ENCODE measurements at regions of chr11 and their contacts with region 1.

Region 1: DNA sequence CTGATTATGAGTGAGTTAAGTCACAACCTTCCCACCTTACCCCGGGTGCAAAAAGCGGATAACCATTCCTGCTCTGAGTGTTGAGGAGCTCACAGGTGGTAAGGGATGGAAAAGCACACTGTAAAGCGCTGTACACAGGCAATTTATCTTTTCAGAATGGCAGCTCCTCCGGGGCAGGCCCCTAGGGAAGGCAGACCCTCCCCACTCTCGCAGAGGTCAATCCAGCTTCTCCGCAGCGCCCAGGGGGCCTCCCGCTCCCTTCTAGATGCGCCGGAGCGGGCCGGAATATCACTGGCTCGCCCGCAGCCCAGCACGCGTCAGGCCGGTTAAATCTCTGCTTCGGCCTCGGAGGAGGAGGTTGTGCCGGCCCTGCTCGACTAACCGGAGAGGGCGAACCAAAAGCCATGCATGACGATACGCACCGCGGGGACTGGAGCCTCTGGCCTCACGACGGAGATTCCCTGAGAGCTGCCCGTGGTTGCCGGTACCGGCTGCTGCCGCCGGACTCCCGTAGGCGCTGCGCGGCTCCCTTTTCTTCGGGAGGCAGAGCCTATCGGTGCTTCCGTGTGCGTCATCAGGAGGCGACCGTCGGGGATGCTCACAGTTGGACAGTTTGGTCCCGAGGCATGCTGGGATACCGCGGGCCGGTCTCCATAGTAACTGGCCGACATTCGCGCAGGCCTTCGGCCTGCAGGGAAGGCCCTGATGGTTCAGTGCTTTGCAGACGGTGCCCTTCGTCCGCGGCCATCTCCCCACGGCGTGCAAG is at the start of gene BRMS1:
- DNase-seq: peak; percentile 95 to 98
- ATAC-seq: peak; percentile 88 to 95 (median 91)
- H3K4me3 ChIP-seq: peak within 1 kb of the TSS; percentile 91
- H3K4me3 Mint-ChIP-seq: peak within 1 kb of the TSS; percentile 98
- H3K27ac ChIP-seq: peak within 1 kb of the TSS; percentile 86
- H3K27ac Mint-ChIP-seq: peak within 1 kb of the TSS; percentile 96
- H3K4me1 ChIP-seq: peaks cover 46% of the 10 kb centered on the region
- H3K4me1 Mint-ChIP-seq: peaks cover 36 to 45% of the 10 kb centered on the region in 2 donors
- H3K27me3 ChIP-seq: no peaks in the 10 kb centered on the region
- H3K27me3 Mint-ChIP-seq: peaks cover 0 to 7% of the 10 kb centered on the region in 2 donors
- CTCF ChIP-seq: no peak
- total RNA-seq, gene BRMS1: 48.1 to 55.6 (median 48.2) TPM

Region 2: DNA sequence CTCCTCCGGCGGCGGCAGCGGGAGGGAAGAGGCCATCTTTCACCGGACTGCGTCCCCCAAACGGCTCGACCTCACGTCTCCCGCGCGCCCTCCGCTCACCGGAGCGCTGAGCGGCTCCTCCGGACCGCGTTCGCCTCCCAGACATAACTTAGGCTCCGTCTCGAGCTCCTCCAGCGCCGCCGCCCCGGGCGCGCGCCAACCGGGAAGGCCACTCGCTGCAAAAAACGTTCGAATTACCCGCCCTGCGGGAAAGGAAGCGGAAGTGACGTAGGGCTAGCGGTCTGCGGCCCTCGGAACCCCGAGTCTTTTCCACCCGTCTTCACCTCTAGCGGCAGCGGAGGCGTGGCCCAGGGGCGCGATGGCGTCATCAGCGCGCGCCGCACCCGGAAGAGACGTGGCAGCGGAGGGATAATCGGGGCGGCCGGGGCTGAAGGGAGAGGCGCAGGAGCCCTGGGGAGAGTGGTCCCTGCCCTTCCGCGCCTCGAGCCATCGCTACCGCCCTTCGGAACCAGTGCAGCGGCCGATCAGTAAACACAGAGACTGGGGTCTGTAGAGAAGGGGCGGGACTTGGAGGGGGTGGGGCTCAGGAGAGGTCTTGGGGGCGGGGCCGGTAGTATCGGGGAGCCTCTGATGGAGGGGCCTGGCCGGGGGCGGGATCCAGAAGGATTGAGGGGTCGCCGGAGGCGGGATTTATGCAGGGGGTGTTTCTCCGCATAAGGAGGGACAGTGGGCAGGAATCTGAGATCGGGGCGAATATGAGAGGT is 1260.7 kb before region 1 on chr11 and contains the starts of genes CDCA5 and ZFPL1:
- intact Hi-C with region 1: loop called (anchors 10 kb)
- DNase-seq: peak; percentile 98 to 99
- ATAC-seq: peak; percentile 90 to 93 (median 92)
- H3K4me3 ChIP-seq: peak within 1 kb of the TSS; percentile 81
- H3K4me3 Mint-ChIP-seq: peak within 1 kb of the TSS; percentile 94
- H3K27ac ChIP-seq: peak within 1 kb of the TSS; percentile 96
- H3K27ac Mint-ChIP-seq: peak within 1 kb of the TSS; percentile 98 to 100
- H3K4me1 ChIP-seq: peaks cover 16% of the 10 kb centered on the region
- H3K4me1 Mint-ChIP-seq: peaks cover 27 to 31% of the 10 kb centered on the region in 2 donors
- H3K27me3 ChIP-seq: no peaks in the 10 kb centered on the region
- H3K27me3 Mint-ChIP-seq: no peaks in the 10 kb centered on the region
- CTCF ChIP-seq: no peak
- total RNA-seq, gene CDCA5: 3.3 to 6.8 (median 3.8) TPM
- total RNA-seq, gene ZFPL1: 49.8 to 60.2 (median 50.8) TPM

Region 3: DNA sequence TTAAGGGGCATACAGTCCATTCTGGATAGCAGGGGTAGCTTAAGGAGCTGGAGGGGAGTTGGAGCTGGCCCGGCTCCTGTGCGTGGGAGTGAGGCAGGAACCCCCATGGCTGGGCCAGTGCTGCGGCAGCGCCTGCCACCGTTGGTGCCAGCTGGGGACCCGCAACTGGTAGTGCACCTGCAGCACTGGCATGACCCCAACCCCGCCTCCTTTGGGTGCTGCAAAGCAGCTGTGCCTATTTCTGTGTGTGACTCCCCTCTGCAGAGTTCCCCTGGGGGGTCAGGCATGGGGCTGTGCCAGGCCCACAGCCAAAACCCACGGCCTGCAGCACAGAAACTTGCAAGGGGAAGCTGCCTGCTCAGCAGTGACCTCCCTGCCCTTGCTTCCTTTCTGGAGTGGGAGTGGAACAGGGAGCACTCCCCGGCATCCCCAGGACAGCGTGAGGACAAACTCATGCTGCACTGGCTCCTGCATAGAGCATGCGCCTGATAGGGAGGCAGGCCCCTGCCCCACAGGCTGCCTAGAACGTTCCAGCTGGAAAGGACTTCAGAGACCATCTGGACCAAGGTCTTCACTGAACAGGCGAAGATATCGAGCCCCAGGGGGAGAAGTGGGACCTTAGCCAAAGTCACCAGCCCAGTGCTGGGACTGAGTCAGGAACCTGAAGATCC is 102.5 kb before region 1 on chr11:
- intact Hi-C with region 1: no loop called
- DNase-seq: no peak
- ATAC-seq: no peak
- H3K4me3 ChIP-seq: no peak overlapping the region
- H3K4me3 Mint-ChIP-seq: no peak overlapping the region
- H3K27ac ChIP-seq: no peak overlapping the region
- H3K27ac Mint-ChIP-seq: no peak overlapping the region
- H3K4me1 ChIP-seq: peaks cover 36% of the 10 kb centered on the region
- H3K4me1 Mint-ChIP-seq: peaks cover 16 to 27% of the 10 kb centered on the region in 2 donors
- H3K27me3 ChIP-seq: no peaks in the 10 kb centered on the region
- H3K27me3 Mint-ChIP-seq: no peaks in the 10 kb centered on the region
- CTCF ChIP-seq: no peak

Region 4: DNA sequence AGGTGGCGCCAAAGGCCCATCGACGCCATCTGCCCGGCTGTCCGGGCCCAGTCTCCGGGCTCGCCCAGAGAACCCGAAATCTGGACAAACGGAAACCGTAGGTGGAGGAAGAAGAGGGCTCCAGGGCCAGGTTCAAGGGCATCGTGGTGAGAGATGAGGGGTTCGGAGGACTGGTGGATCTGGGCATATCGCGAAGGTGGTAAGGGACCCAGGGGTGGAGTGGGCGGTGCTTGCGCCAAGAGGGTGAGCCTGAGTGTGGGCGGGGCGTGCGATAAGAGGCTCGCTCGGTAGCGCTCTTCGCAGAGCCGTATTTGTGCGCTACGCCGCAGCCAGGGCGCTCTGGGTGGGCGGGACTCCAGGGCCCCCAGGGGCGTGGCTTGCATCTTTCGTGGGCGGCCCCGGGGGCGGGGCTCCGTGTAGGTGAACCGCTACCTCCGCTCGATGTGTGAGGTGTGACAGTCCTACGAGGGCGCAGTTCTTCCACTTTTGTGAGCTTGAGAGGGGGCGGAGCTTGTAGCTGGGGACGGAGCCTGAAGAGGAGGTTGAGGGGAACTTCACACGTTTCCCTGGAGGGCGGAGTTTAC is 32.7 kb before region 1 on chr11:
- intact Hi-C with region 1: loop called (anchors 1 kb)
- DNase-seq: peak; percentile 95 to 99
- ATAC-seq: peak; percentile 77 to 89 (median 78)
- H3K4me3 ChIP-seq: peak overlapping the region; percentile 51
- H3K4me3 Mint-ChIP-seq: peak overlapping the region; percentile 98
- H3K27ac ChIP-seq: peak overlapping the region; percentile 85
- H3K27ac Mint-ChIP-seq: peak overlapping the region; percentile 94 to 97
- H3K4me1 ChIP-seq: peaks cover 23% of the 10 kb centered on the region
- H3K4me1 Mint-ChIP-seq: peaks cover 11 to 21% of the 10 kb centered on the region in 2 donors
- H3K27me3 ChIP-seq: no peaks in the 10 kb centered on the region
- H3K27me3 Mint-ChIP-seq: peaks cover 11 to 22% of the 10 kb centered on the region in 2 donors
- CTCF ChIP-seq: peak; percentile 57

Region 5: DNA sequence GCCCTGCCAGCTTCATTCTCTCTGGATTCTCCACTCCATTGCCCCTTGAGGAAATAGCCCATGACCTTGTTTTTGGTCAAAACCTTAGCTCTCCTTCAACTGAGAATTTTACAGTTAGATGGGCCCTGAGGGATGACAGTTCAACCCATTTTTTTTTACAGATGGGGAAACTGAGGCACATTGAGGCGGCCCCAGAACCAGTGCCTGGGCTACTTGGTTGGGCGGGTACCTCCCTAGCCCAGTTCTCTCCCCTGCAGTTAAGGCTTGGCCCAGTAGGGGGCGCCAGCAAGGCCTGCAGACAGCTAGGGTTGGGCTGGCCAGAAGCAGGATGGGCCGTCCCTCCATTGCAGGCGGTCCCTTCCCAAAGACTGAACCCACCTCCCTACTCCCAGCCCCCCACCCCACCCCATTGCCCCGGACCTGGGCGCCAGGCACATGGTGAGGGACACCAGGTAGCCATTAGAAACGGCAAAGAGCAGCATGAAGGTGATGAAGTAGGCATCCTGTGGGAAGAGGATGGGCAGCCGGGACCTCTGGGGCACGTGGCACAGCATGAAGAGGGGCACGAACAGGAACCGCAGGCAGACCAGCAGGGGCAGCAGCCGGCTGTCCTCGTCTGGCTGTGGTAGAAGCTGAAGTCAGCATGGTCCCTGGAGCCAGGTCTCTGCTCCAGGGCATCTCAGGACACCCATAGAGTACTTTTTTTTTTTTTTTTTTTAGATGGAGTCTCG is 19.2 kb after region 1 on chr11:
- intact Hi-C with region 1: no loop called
- DNase-seq: peak; percentile 58 to 74
- ATAC-seq: peak; percentile 58 to 75 (median 60)
- H3K4me3 ChIP-seq: no peak overlapping the region
- H3K4me3 Mint-ChIP-seq: no peak overlapping the region
- H3K27ac ChIP-seq: no peak overlapping the region
- H3K27ac Mint-ChIP-seq: no peak overlapping the region
- H3K4me1 ChIP-seq: no peaks in the 10 kb centered on the region
- H3K4me1 Mint-ChIP-seq: no peaks in the 10 kb centered on the region
- H3K27me3 ChIP-seq: no peaks in the 10 kb centered on the region
- H3K27me3 Mint-ChIP-seq: peaks cover 0 to 2% of the 10 kb centered on the region in 2 donors
- CTCF ChIP-seq: peak; percentile 67

Region 6: DNA sequence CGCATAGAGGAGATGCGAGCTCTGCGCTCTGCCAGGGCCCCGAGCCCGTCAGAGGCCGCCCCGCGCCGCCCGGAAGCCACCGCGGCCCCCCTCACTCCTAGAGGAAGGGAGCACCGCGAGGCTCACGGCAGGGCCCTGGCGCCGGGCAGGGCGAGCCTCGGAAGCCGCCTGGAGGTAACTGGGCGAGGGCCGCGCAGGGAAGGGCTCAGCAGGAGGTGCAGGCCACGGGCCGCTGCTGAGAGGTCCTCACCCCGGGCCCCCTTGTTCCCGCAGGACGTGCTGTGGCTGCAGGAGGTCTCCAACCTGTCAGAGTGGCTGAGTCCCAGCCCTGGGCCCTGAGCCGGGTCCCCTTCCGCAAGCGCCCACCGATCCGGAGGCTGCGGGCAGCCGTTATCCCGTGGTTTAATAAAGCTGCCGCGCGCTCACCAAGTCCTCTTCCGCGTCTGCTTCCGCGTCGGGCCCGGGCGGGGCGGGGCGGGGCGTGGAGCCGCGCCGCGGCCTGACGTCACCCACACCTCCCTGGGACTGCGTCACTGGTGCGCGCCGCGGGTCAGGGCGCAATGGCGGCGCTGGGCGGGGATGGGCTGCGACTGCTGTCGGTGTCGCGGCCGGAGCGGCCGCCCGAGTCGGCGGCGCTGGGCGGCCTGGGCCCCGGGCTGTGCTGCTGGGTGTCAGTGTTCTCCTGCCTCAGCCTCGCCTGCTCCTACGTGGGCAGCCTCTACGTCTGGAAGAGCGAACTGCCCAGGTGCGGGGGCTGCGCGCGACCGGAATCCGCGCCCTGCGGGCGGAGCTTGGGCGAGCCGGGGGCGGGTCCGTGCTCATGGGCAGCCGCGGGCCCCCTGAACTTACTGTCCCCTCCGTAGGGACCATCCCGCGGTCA is 498.4 kb after region 1 on chr11 and contains the start of gene RCE1:
- intact Hi-C with region 1: loop called (anchors 1 kb)
- DNase-seq: peak; percentile 94 to 96
- ATAC-seq: peak; percentile 90 to 97 (median 91)
- H3K4me3 ChIP-seq: peak within 1 kb of the TSS; percentile 97
- H3K4me3 Mint-ChIP-seq: peak within 1 kb of the TSS; percentile 94
- H3K27ac ChIP-seq: peak within 1 kb of the TSS; percentile 100
- H3K27ac Mint-ChIP-seq: peak within 1 kb of the TSS; percentile 93 to 97
- H3K4me1 ChIP-seq: peaks cover 38% of the 10 kb centered on the region
- H3K4me1 Mint-ChIP-seq: peaks cover 39 to 49% of the 10 kb centered on the region in 2 donors
- H3K27me3 ChIP-seq: no peaks in the 10 kb centered on the region
- H3K27me3 Mint-ChIP-seq: no peaks in the 10 kb centered on the region
- CTCF ChIP-seq: no peak
- total RNA-seq, gene RCE1: 41.3 to 47.0 (median 41.7) TPM